Thyroid gland (tissue), 4 donors: ENCODE measurements at regions of chr2 and their contacts with region 1.

Region 1: DNA sequence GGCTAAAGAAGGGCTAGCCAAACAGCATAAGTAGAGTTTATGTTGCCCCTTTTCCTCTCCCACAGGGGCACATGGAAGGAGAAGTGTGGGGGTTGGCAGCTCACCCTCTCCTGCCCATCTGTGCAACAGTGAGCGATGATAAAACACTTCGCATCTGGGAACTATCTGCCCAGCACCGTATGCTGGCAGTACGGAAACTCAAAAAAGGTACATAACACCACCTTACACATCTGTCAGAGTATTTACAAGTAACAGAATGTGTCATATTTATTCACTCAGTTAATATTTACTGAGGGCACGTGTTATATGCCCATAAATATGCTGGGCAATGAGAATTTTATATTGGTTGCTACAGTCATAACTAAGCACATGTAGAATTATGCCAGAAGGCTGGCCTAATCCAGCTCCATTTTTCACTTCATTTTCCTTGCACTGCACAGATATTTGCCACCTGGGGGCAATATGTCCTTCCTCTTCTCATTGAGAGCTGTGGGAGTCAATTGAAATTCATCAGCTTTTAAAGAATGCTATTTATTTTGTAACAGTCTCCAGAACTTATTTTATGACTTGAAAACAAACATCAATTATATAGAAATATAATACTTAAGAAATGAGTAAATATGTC is 150.6 kb downstream of the RTN4 start:
- DNase-seq: peak; percentile 13 to 17
- H3K4me3 ChIP-seq: no peak overlapping the region
- H3K27ac ChIP-seq: no peak overlapping the region
- H3K4me1 ChIP-seq: no peaks in the 10 kb centered on the region
- H3K27me3 ChIP-seq: no peaks in the 10 kb centered on the region
- CTCF ChIP-seq: peak; percentile 18 to 73 (median 60)
- POLR2A ChIP-seq: no peak

Region 2: DNA sequence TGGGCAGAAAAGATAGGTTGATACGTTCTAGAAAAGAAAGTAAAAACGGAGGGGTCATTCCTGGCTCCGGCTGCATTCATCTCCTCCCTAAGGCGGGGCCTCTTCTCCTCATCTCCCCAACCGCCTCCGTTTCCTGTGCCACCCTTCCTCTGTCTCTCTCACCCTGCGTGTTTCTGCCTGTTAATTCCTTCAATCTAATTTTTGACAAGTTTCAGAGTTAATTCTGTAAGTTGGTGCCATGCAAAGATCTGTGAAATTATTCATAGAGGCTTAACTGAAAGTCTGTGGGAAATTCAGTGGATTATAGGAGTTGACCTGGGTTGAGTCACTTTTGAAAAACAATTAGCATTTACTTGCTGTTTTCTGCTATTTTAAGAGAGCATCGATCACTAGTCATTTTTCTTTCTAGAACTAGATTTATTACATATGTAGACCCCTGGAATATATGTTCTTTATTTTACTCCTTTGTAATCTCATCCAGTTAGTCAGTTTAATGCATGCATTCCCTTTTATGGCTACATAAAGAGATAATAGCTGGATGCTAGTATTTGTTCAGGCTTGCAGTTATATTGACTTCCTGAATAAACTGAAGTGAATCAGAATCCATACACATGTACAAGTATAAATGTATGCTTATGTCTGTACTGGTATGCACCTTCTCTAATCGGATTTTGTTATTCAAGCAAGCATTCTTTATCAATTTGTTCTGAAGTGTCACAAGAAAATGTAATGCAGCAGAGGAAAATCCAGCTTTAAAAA is 85.1 kb before region 1 on chr2:
- intact Hi-C with region 1: no loop called
- DNase-seq: no peak
- H3K4me3 ChIP-seq: no peak overlapping the region
- H3K27ac ChIP-seq: no peak overlapping the region
- H3K4me1 ChIP-seq: no peaks in the 10 kb centered on the region
- H3K27me3 ChIP-seq: no peaks in the 10 kb centered on the region
- CTCF ChIP-seq: no peak
- POLR2A ChIP-seq: no peak

Region 3: GRCh38 chr2:55173438-55174054 is 273.9 kb after region 1 on chr2:
- intact Hi-C with region 1: loop called (anchors 5 kb)
- DNase-seq: no peak
- H3K4me3 ChIP-seq: no peak overlapping the region
- H3K27ac ChIP-seq: no peak overlapping the region
- H3K4me1 ChIP-seq: peaks cover 0 to 5% of the 10 kb centered on the region in 2 donors
- H3K27me3 ChIP-seq: no peaks in the 10 kb centered on the region
- CTCF ChIP-seq: no peak
- POLR2A ChIP-seq: no peak